ENCODE measurements at regions of chr1 and their contacts with region 1.

Region 1: DNA sequence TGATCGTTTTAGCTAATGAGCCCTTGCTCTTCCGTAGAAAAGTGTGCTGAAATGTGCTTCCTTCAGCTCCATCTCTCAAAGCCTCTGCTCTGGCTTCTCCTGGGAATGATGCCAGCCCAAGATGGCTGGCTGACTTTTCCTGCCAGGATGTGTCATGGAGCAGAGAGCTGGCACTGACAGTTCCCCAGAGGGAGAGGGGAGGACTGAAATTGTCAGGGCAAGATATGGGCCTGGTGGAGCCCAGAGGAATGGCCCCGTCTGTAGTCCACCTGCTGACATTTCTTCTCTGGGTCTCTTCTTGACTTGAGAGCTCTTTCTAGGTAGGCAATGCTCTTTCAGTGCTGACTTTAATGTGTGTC is 25.2 kb upstream of the PLEKHA6 start:
- DNase-seq: no peak
- ATAC-seq: no peak
- H3K4me3 Mint-ChIP-seq: no peak overlapping the region
- H3K27ac Mint-ChIP-seq: no peak overlapping the region
- H3K4me1 Mint-ChIP-seq: peaks cover 4% of the 10 kb centered on the region
- H3K27me3 Mint-ChIP-seq: peaks cover under 1% of the 10 kb centered on the region
- CTCF ChIP-seq: no peak

Region 2: DNA sequence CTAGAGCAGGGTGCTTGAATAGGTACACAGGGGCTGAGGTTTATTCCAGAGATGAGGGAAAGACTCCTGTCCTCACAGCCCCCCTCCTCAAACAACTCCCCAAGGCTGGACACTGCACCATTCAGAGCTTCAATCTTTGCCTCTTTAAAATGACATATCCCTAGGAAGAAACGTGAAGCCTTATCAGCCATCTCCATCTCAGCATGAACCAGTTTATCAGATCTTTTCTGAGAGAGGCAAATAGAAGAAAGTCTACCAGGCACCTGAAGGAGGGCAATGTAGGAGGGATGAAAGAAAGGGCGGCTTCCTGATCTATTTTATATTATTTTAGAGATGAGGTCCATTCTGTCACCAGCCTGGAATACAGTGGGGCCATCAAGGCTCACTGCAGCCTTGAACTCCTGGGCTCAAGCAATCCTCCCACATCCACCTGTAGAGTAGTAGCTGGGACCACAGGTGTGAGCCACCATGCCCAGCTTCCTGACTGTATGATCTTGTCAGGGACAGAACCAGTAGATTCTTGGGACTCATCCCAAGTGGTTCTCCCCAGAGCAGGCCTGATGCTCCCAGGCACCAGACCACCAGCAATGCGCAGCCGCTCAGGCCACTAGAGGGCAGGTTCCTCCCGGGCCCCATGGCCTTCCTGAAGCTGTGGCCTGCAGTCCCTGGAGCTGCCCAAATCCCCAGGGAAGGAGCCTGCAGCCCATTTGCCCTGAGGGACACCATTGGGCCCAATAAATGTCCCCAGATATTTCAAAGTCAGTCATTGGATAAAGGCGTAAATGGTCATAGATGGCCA is 126.8 kb before region 1 on chr1:
- CTCF ChIA-PET with region 1: interaction called, 10 read pairs
- POLR2A ChIA-PET with region 1: no interaction called
- intact Hi-C with region 1: no loop called
- DNase-seq: peak; percentile 63
- ATAC-seq: peak; percentile 47
- H3K4me3 Mint-ChIP-seq: no peak overlapping the region
- H3K27ac Mint-ChIP-seq: no peak overlapping the region
- H3K4me1 Mint-ChIP-seq: no peaks in the 10 kb centered on the region
- H3K27me3 Mint-ChIP-seq: no peaks in the 10 kb centered on the region
- CTCF ChIP-seq: peak; percentile 75

Region 3: GRCh38 chr1:204286831-204287421 is 98.0 kb before region 1 on chr1:
- CTCF ChIA-PET with region 1: no interaction called
- POLR2A ChIA-PET with region 1: no interaction called
- intact Hi-C with region 1: no loop called
- DNase-seq: peak; percentile 50
- ATAC-seq: peak; percentile 87
- H3K4me3 Mint-ChIP-seq: peak overlapping the region; percentile 57
- H3K27ac Mint-ChIP-seq: peak overlapping the region; percentile 83
- H3K4me1 Mint-ChIP-seq: peaks cover 22% of the 10 kb centered on the region
- H3K27me3 Mint-ChIP-seq: no peaks in the 10 kb centered on the region
- CTCF ChIP-seq: no peak

Region 4: DNA sequence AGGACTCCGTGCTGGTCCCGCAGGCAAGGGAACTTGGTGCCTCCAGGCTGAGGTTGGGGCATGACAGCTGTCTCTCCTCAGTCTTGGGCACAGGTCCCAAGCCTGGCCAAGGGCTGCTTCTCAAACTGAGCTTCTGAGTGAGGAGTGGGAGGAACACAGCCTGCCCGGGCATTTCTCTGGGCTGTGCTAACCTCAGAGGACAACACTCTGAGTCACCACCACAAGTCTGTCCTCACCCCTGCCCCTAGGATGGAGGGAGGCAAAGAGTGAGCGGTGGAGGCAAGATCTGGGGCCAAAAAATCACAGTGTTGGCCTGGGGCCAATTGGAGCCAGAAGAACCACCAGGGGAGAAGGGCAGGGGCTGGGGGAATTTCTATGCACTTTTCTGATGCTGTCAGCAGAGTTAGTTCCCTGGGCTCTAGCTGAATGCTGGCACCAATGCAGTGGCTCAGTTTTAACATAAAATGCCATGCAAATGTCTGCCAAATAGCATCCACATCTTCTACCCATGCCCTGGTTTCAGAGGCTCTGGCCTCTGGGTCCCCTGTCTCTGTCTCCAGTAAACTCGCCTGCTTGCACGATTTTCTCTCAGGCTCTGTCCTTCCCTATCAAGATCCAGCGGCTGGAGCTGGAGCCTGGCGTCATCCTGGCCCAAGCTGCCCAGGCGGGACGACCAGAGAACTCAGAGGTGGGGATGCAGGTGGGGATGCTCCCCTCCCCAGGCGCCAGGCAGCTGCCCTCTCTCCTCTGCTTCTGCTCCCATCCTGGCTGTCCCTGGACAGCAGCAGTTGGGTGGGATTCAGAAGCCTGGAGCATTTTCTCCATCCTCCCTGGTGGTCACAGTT is 1108.5 kb after region 1 on chr1:
- CTCF ChIA-PET with region 1: no interaction called
- POLR2A ChIA-PET with region 1: no interaction called
- intact Hi-C with region 1: no loop called
- DNase-seq: peak; percentile 45
- ATAC-seq: peak; percentile 85
- H3K4me3 Mint-ChIP-seq: no peak overlapping the region
- H3K27ac Mint-ChIP-seq: no peak overlapping the region
- H3K4me1 Mint-ChIP-seq: peaks cover 4% of the 10 kb centered on the region
- H3K27me3 Mint-ChIP-seq: peaks cover 23% of the 10 kb centered on the region
- CTCF ChIP-seq: no peak

Measured in activated CD8-positive, alpha-beta T cell treated with anti-CD3 and anti-CD28 coated beads for 36 hours (primary cell).